ENCODE measurements at regions of chr7 and their contacts with region 1.

Region 1: GRCh38 chr7:100081535-100082102 is at the start of gene ZNF3:
- DNase-seq: peak; percentile 99
- ATAC-seq: peak; percentile 77
- H3K4me3 ChIP-seq: peak within 1 kb of the TSS; percentile 70 to 84 (median 79)
- H3K4me3 Mint-ChIP-seq: peak within 1 kb of the TSS; percentile 86
- H3K27ac ChIP-seq: peak within 1 kb of the TSS; percentile 81 to 91
- H3K27ac Mint-ChIP-seq: peak within 1 kb of the TSS; percentile 91
- H3K4me1 ChIP-seq: peaks cover 16 to 24% of the 10 kb centered on the region in 2 donors
- H3K4me1 Mint-ChIP-seq: peaks cover 32% of the 10 kb centered on the region
- H3K27me3 ChIP-seq: no peaks in the 10 kb centered on the region
- H3K27me3 Mint-ChIP-seq: no peaks in the 10 kb centered on the region
- CTCF ChIP-seq: peak; percentile 96
- total RNA-seq, gene ZNF3: 44.8 and 48.5 TPM in 2 replicates

Region 2: GRCh38 chr7:98149116-98149692 is 1932.4 kb before region 1 on chr7:
- CTCF ChIA-PET with region 1: no interaction called
- POLR2A ChIA-PET with region 1: no interaction called
- intact Hi-C with region 1: no loop called
- DNase-seq: no peak
- ATAC-seq: no peak
- H3K4me3 ChIP-seq: no peak overlapping the region
- H3K4me3 Mint-ChIP-seq: no peak overlapping the region
- H3K27ac ChIP-seq: no peak overlapping the region
- H3K27ac Mint-ChIP-seq: no peak overlapping the region
- H3K4me1 ChIP-seq: no peaks in the 10 kb centered on the region
- H3K4me1 Mint-ChIP-seq: no peaks in the 10 kb centered on the region
- H3K27me3 ChIP-seq: peaks cover 0 to 13% (median 4%) of the 10 kb centered on the region in 4 experiments
- H3K27me3 Mint-ChIP-seq: peaks cover 7% of the 10 kb centered on the region
- CTCF ChIP-seq: no peak

Region 3: GRCh38 chr7:99930376-99930775 is 151.2 kb before region 1 on chr7:
- CTCF ChIA-PET with region 1: no interaction called
- POLR2A ChIA-PET with region 1: no interaction called
- intact Hi-C with region 1: no loop called
- DNase-seq: no peak
- ATAC-seq: no peak
- H3K4me3 ChIP-seq: no peak overlapping the region
- H3K4me3 Mint-ChIP-seq: no peak overlapping the region
- H3K27ac ChIP-seq: no peak overlapping the region
- H3K27ac Mint-ChIP-seq: no peak overlapping the region
- H3K4me1 ChIP-seq: peaks cover 6 to 12% of the 10 kb centered on the region in 2 donors
- H3K4me1 Mint-ChIP-seq: peaks cover 1% of the 10 kb centered on the region
- H3K27me3 ChIP-seq: peaks cover 0 to 61% (median 29%) of the 10 kb centered on the region in 4 experiments
- H3K27me3 Mint-ChIP-seq: peaks cover 78% of the 10 kb centered on the region
- CTCF ChIP-seq: no peak

Region 4: GRCh38 chr7:99984593-99984992 is 97.0 kb before region 1 on chr7:
- CTCF ChIA-PET with region 1: no interaction called
- POLR2A ChIA-PET with region 1: no interaction called
- intact Hi-C with region 1: no loop called
- DNase-seq: no peak
- ATAC-seq: no peak
- H3K4me3 ChIP-seq: no peak overlapping the region
- H3K4me3 Mint-ChIP-seq: no peak overlapping the region
- H3K27ac ChIP-seq: no peak overlapping the region
- H3K27ac Mint-ChIP-seq: no peak overlapping the region
- H3K4me1 ChIP-seq: no peaks in the 10 kb centered on the region
- H3K4me1 Mint-ChIP-seq: peaks cover 1% of the 10 kb centered on the region
- H3K27me3 ChIP-seq: peaks cover 0 to 5% (median 0%) of the 10 kb centered on the region in 4 experiments
- H3K27me3 Mint-ChIP-seq: peaks cover 36% of the 10 kb centered on the region
- CTCF ChIP-seq: no peak

Region 5: DNA sequence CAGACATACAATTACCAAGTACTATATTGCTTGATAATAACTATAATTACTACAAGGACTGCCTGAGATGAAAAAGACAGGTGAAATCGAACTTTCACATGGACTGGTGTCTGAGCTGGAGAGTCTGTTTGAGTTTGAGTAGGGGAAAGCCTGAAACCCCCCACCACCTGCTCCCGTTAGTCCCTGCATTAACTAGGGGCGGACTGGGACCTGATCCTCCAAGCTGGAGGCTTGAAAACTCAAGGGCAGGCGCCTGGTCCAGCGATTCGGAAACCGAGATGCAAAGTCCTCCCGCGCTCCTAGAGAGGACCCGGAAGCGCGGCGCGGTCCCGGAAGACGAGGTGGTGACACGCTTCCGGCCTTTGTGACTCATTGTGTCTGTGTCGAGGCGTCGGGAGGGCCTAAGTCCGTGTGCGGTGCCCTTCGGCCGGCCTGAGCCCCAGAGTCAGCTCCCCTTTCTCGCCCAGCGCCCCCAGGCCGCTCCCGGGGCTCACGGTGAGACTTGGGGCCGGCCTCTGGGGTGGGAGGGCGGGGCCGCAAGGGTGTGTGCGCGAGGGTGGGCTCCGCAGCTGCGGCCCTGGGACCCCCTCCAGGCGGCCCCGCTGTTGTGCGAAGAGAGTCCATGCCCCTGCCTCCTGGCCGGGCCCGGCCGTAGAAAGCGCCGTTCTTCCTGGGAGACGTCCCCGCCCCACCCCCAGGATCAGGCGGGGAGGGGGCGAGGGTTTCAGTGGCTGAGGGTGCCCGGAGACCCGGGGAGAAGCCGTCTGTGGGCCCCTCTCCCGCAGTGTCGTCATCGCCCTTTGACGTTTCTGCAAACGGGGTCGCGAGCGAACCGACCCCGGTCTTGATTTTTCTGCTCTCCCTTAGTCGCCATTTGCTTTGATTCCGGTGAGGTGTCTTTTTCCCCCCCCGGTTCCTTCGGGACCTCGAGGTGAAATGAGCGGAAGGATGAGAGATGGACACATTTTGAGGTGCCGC is 66.1 kb before region 1 on chr7 and contains the start of gene ZKSCAN1:
- CTCF ChIA-PET with region 1: interaction called, 3 read pairs
- POLR2A ChIA-PET with region 1: interaction called, 7 read pairs
- intact Hi-C with region 1: loop called (anchors 1 kb)
- DNase-seq: peak; percentile 91
- ATAC-seq: peak; percentile 95
- H3K4me3 ChIP-seq: peak within 1 kb of the TSS; percentile 75 to 89 (median 85)
- H3K4me3 Mint-ChIP-seq: peak within 1 kb of the TSS; percentile 93
- H3K27ac ChIP-seq: peak within 1 kb of the TSS; percentile 80 to 87
- H3K27ac Mint-ChIP-seq: peak within 1 kb of the TSS; percentile 94
- H3K4me1 ChIP-seq: peaks cover 15 to 19% of the 10 kb centered on the region in 2 donors
- H3K4me1 Mint-ChIP-seq: peaks cover 38% of the 10 kb centered on the region
- H3K27me3 ChIP-seq: no peaks in the 10 kb centered on the region
- H3K27me3 Mint-ChIP-seq: peaks cover 6% of the 10 kb centered on the region
- CTCF ChIP-seq: no peak
- total RNA-seq, gene ZKSCAN1: 89.3 and 97.4 TPM in 2 replicates

Region 6: DNA sequence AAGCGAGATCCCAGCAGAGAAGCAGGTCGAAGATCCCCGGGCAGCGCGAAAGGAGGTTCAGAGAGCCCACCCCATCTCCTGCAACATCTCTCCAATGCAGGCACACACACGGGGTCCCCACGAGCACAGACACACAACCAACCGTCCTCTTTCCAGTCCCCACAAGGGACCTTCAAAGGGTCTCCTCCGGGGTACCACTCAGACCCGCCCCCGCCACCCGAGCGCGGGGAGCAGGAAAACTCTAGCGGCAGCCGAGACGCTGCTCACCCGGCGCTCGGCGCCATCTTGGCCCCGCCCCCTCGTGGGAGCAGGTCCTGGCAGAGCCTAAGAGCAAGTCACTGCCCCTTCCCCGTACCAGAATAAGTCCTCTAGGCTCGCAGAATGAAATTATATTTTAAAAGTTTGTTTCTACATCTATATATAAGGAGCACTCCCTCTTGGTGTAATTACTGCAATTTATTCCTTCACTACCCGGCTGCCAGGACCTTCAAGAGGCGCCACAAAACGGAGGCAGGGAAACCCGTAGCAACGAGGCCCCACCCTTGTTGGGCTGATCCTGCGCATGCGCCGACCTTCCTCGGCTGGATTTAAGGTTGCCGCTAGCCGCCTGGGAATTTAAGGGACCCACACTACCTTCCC is 37.6 kb after region 1 on chr7 and contains the starts of genes CNPY4 and TAF6:
- CTCF ChIA-PET with region 1: interaction called, 4 read pairs
- POLR2A ChIA-PET with region 1: interaction called, 3 read pairs
- intact Hi-C with region 1: loop called (anchors 1 kb)
- DNase-seq: peak; percentile 97
- ATAC-seq: peak; percentile 85
- H3K4me3 ChIP-seq: peak within 1 kb of the TSS; percentile 67 to 94 (median 92)
- H3K4me3 Mint-ChIP-seq: peak within 1 kb of the TSS; percentile 98
- H3K27ac ChIP-seq: peak within 1 kb of the TSS; percentile 93 to 97
- H3K27ac Mint-ChIP-seq: peak within 1 kb of the TSS; percentile 95
- H3K4me1 ChIP-seq: peaks cover 14 to 20% of the 10 kb centered on the region in 2 donors
- H3K4me1 Mint-ChIP-seq: peaks cover 28% of the 10 kb centered on the region
- H3K27me3 ChIP-seq: no peaks in the 10 kb centered on the region
- H3K27me3 Mint-ChIP-seq: no peaks in the 10 kb centered on the region
- CTCF ChIP-seq: peak; percentile 14
- total RNA-seq, gene CNPY4: 13.9 and 16.8 TPM in 2 replicates
- total RNA-seq, gene TAF6: 65.2 and 65.8 TPM in 2 replicates

Region 7: GRCh38 chr7:100221231-100221718 is 139.7 kb after region 1 on chr7:
- CTCF ChIA-PET with region 1: no interaction called
- POLR2A ChIA-PET with region 1: no interaction called
- intact Hi-C with region 1: loop called (anchors 5 kb)
- DNase-seq: peak; percentile 84
- ATAC-seq: peak; percentile 56
- H3K4me3 ChIP-seq: peak overlapping the region in 4 of 5 experiments; percentile 53 to 65 (median 64)
- H3K4me3 Mint-ChIP-seq: peak overlapping the region; percentile 85
- H3K27ac ChIP-seq: peak overlapping the region; percentile 97 to 100
- H3K27ac Mint-ChIP-seq: peak overlapping the region; percentile 95
- H3K4me1 ChIP-seq: peaks cover 42 to 54% of the 10 kb centered on the region in 2 donors
- H3K4me1 Mint-ChIP-seq: peaks cover 74% of the 10 kb centered on the region
- H3K27me3 ChIP-seq: no peaks in the 10 kb centered on the region
- H3K27me3 Mint-ChIP-seq: no peaks in the 10 kb centered on the region
- CTCF ChIP-seq: no peak

Region 8: GRCh38 chr7:100611974-100612729 is 530.5 kb after region 1 on chr7 and contains the start of gene MOSPD3:
- CTCF ChIA-PET with region 1: no interaction called
- POLR2A ChIA-PET with region 1: no interaction called
- intact Hi-C with region 1: loop called (anchors 10 kb)
- DNase-seq: peak; percentile 99
- ATAC-seq: peak; percentile 91
- H3K4me3 ChIP-seq: peak within 1 kb of the TSS; percentile 53 to 93 (median 84)
- H3K4me3 Mint-ChIP-seq: peak within 1 kb of the TSS; percentile 93
- H3K27ac ChIP-seq: peak within 1 kb of the TSS; percentile 82
- H3K27ac Mint-ChIP-seq: peak within 1 kb of the TSS; percentile 99
- H3K4me1 ChIP-seq: peaks cover 13 to 19% of the 10 kb centered on the region in 2 donors
- H3K4me1 Mint-ChIP-seq: peaks cover 18% of the 10 kb centered on the region
- H3K27me3 ChIP-seq: no peaks in the 10 kb centered on the region
- H3K27me3 Mint-ChIP-seq: no peaks in the 10 kb centered on the region
- CTCF ChIP-seq: no peak
- total RNA-seq, gene MOSPD3: 17.3 and 18.8 TPM in 2 replicates

Measured in B cell (primary cell).